ENCODE measurements at regions of chr9 and their contacts with region 1.

Region 1: DNA sequence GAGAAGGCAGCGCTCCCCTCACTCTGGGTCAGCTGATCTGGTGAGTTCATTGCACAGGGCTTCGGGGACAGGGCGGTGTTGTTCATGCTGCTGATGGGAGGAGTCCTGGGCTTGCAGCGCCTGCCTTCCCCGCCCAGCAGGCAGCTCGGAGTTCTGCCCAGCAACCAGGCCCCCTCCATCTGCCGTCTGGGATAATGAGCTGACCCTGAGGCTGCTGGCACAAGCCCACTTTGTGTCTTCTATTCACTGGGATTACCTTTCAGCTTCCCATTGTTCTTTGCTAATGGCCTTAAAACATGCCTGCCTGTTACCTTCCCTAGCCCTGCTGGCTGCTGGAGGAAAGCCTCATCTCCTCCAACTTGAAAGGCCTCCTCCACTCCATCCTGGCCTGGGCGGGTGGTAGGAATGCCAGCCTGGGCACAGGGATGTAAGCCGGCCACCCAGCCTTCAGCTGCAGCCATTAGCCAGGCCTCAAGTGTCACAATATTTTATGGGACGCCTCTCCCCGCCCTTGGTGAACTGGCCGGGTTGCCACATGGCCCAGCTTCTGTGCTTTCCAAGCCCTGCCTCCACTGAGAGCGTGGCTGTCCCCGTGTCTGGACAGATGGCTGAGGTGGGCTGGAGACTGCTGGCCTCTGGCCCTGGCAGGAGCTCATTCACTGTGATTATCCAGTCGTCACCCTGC is 70.4 kb downstream of the GADD45G start:
- DNase-seq: peak; percentile 61
- ATAC-seq: peak; percentile 77
- H3K4me3 Mint-ChIP-seq: no peak overlapping the region
- H3K27ac Mint-ChIP-seq: no peak overlapping the region
- H3K4me1 Mint-ChIP-seq: peaks cover 68% of the 10 kb centered on the region
- H3K27me3 Mint-ChIP-seq: peaks cover 21% of the 10 kb centered on the region
- CTCF ChIP-seq: no peak

Region 2: DNA sequence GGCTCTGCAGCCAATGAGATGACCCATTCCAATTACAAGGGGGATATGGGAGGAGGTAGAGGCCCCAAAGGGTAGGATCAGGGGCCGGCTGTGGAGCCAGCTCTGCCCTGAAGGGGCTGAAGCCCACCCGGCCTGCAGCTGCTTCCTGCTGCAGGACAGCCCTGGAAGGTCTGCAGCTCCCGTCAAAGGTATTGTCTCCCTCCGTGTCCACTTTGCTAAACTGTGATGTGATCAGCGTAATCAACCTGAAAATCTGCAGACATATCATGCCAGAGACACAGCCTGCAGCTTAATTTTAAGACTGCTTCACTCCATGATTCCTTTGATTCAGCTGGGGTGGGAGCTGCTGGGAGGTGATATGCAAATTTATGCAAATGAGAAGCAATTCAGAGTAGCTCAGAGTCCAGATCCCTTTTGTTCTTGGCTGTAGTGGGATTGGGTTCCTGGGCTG is 20.3 kb after region 1 on chr9:
- CTCF ChIA-PET with region 1: interaction called, 12 read pairs
- POLR2A ChIA-PET with region 1: interaction called, 4 read pairs
- DNase-seq: peak; percentile 36
- ATAC-seq: peak; percentile 96
- H3K4me3 Mint-ChIP-seq: peak overlapping the region; percentile 38
- H3K27ac Mint-ChIP-seq: peak overlapping the region; percentile 96
- H3K4me1 Mint-ChIP-seq: peaks cover 51% of the 10 kb centered on the region
- H3K27me3 Mint-ChIP-seq: peaks cover 4% of the 10 kb centered on the region; the same call in 1 of the 2 replicates
- CTCF ChIP-seq: no peak